Esophagus muscularis mucosa (tissue), 4 donors: ENCODE measurements at regions of chrX and their contacts with region 1.

Region 1: GRCh38 chrX:148133105-148133725 is 152.1 kb downstream of the FMR1NB start:
- DNase-seq: no peak
- H3K4me3 ChIP-seq: no peak overlapping the region
- H3K27ac ChIP-seq: no peak overlapping the region
- H3K4me1 ChIP-seq: no peaks in the 10 kb centered on the region
- H3K27me3 ChIP-seq: no peaks in the 10 kb centered on the region
- CTCF ChIP-seq: no peak
- EP300 ChIP-seq: no peak
- POLR2A ChIP-seq: no peak

Region 2: GRCh38 chrX:148229801-148230303 is 96.6 kb after region 1 on chrX:
- intact Hi-C with region 1: no loop called
- DNase-seq: no peak
- H3K4me3 ChIP-seq: no peak overlapping the region
- H3K27ac ChIP-seq: no peak overlapping the region
- H3K4me1 ChIP-seq: no peaks in the 10 kb centered on the region
- H3K27me3 ChIP-seq: no peaks in the 10 kb centered on the region
- CTCF ChIP-seq: no peak
- EP300 ChIP-seq: no peak
- POLR2A ChIP-seq: no peak

Region 3: DNA sequence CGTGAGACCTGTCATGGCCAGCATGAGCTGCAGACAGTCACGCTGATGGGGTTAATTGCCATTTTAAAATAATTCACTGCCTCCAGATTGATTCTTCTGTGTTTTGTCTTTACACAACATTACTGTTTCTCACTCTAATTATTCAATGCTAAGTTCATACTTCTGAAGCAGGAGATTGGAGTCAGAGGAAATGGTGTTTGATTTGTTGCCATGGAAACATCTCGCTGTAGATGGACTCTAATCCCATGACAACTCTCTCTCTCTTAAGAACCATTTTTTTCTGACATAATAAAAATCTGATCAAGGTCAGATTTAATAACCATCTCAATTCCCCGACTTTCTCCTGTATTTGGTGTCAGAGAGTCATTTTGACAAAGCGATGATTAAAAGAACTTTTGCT is 1162.9 kb after region 1 on chrX:
- intact Hi-C with region 1: loop called (anchors 10 kb)
- DNase-seq: no peak
- H3K4me3 ChIP-seq: no peak overlapping the region
- H3K27ac ChIP-seq: no peak overlapping the region
- H3K4me1 ChIP-seq: no peaks in the 10 kb centered on the region
- H3K27me3 ChIP-seq: no peaks in the 10 kb centered on the region
- CTCF ChIP-seq: no peak
- EP300 ChIP-seq: no peak
- POLR2A ChIP-seq: no peak